CD8-positive, alpha-beta T cell (primary cell): ENCODE measurements at regions of chr17 and their contacts with region 1.

Region 1: DNA sequence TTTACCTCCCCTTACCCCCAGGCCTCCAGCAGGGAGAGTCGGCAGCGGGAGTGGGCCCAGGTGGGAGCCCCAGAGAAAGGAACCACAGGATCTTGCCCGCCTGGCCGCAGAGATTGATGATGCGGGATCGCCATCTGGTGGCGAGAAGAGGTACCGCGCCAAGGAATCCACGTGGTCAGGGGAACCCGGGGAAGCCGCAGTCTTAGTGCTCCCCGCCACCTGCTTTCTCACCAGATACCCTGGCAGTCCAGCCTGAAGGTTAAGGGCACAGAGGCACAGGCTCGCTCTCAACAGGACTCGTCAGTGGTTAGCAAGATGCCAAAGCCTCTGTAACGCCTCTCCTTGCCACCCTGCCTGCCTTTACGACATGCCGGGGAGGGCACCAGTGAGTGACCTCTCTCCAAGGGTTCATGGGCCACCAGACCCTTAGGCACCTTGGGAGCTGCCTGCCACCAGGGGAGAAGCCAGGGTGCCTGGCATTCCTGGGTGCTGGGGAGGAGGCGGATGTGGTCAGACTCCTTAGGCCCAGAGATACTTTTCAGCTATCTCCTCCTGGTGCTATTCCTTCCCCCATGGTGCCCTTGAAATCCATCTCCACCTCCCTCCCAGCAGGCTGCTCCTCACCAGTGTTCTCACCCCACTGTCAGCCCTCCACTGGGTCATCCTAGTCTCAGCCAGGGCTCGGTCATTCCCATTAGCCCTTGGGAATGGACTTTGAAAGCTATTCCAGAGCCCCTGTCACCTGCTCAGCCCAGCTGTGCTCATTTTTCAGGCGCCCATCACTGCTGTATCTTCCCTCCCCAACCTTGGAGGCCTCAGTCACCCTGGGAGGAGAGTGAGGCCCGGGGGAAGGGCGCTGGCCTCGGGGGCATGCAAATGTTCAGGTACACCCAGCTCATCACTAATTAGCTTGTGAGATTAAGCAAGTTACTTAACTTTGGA is 5.5 kb upstream of the RHBDF2 start:
- DNase-seq: peak; percentile 80 to 96 (median 90)
- ATAC-seq: peak; percentile 84
- H3K4me3 ChIP-seq: no peak overlapping the region
- H3K4me3 Mint-ChIP-seq: no peak overlapping the region
- H3K27ac ChIP-seq: no peak overlapping the region
- H3K27ac Mint-ChIP-seq: peak overlapping the region; percentile 22
- H3K4me1 ChIP-seq: peaks cover 19% of the 10 kb centered on the region
- H3K4me1 Mint-ChIP-seq: peaks cover 24% of the 10 kb centered on the region
- H3K27me3 ChIP-seq: no peaks in the 10 kb centered on the region
- H3K27me3 Mint-ChIP-seq: no peaks in the 10 kb centered on the region
- CTCF ChIP-seq: peak; percentile 93

Region 2: DNA sequence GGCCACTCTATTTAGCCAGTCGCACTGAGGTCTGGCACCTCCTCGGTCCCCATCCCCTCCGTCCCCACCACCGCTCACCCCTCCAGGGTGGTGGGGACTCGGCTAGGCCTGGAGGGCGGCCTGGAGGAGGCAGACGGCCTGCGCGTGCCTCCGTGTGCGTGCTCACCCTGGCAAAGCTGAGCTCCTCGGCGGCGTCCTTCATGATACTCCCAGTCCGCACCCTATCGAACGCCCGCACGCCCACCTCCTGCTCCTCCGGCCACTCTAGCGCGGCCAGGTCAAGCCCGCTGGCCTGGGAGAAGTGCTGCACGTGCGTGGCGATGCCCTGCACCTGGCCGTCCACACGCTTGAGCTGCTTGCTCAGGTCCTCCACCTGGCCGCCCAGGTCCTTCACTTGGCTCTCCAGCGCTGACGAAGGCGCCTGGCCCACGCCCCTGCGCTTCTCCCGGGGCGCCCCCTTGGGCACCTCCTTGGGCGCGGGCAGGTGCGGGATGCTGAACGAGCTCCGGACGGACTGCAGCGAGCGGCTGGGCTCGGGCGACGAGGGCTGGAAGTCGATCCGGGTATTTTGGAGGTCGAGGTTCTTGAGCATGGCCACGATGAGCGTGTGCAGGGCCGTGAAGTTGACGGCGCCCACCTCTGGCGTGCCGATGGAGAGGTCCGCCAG is 199.2 kb before region 1 on chr17:
- CTCF ChIA-PET with region 1: interaction called, 10 read pairs
- POLR2A ChIA-PET with region 1: no interaction called
- intact Hi-C with region 1: loop called (anchors 1 to 5 kb)
- DNase-seq: no peak
- ATAC-seq: no peak
- H3K4me3 ChIP-seq: no peak overlapping the region
- H3K4me3 Mint-ChIP-seq: no peak overlapping the region
- H3K27ac ChIP-seq: no peak overlapping the region
- H3K27ac Mint-ChIP-seq: no peak overlapping the region
- H3K4me1 ChIP-seq: no peaks in the 10 kb centered on the region
- H3K4me1 Mint-ChIP-seq: peaks cover 1% of the 10 kb centered on the region
- H3K27me3 ChIP-seq: no peaks in the 10 kb centered on the region
- H3K27me3 Mint-ChIP-seq: no peaks in the 10 kb centered on the region
- CTCF ChIP-seq: no peak

Region 3: DNA sequence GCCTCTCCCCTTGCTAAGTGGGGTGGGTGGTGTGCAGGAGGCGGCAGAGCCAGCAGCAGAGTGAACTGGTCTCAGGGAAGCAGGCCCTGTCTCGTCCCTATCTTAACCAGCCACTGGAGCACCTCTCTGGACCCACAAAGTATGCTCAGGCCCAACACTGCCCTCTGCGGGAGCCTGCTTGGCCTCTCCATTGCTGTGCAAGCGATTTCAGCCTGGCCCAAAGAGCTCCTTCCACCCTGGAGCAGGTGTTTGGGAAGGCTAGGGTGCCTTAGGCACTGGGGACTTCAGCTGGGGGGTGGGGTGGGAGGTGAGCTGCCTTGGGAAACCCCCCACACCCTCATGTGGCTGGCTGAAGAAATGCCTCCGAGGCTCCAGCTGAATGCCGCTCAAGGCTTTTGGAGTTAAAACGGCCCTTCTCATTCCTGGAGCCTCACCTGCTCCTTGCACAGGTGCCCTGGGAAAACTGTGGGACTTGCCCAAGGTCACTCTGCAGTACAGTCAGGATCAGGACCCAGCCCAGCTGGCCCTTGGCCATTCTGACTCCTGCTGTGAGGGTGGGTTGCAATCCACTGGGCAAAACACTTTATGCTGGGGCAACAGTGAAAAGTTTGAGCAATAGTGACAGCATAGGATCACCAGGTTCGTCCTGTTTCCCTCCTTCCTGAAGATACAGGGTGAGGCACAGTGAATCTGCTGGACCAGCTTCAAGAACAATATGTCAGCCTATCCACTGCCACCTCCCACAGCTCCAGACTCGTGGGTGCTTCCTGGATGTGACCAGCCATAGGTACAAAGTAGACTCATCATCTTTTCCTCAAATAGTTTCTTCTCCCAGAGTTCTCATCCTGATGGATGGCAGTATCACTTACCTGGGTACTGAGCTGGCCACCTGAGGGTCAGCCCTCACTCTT is 47.8 kb before region 1 on chr17:
- CTCF ChIA-PET with region 1: interaction called, 265 read pairs
- POLR2A ChIA-PET with region 1: no interaction called
- intact Hi-C with region 1: no loop called
- DNase-seq: no peak
- ATAC-seq: no peak
- H3K4me3 ChIP-seq: no peak overlapping the region
- H3K4me3 Mint-ChIP-seq: no peak overlapping the region
- H3K27ac ChIP-seq: no peak overlapping the region
- H3K27ac Mint-ChIP-seq: no peak overlapping the region
- H3K4me1 ChIP-seq: no peaks in the 10 kb centered on the region
- H3K4me1 Mint-ChIP-seq: no peaks in the 10 kb centered on the region
- H3K27me3 ChIP-seq: no peaks in the 10 kb centered on the region
- H3K27me3 Mint-ChIP-seq: no peaks in the 10 kb centered on the region
- CTCF ChIP-seq: no peak

Region 4: GRCh38 chr17:76467366-76467765 is 39.3 kb before region 1 on chr17 and contains the start of gene AANAT:
- CTCF ChIA-PET with region 1: interaction called, 265 read pairs
- POLR2A ChIA-PET with region 1: interaction called, 6 read pairs
- intact Hi-C with region 1: loop called (anchors 1 kb)
- DNase-seq: no peak
- ATAC-seq: no peak
- H3K4me3 ChIP-seq: no peak within 1 kb of the TSS
- H3K4me3 Mint-ChIP-seq: no peak within 1 kb of the TSS
- H3K27ac ChIP-seq: no peak within 1 kb of the TSS
- H3K27ac Mint-ChIP-seq: no peak within 1 kb of the TSS
- H3K4me1 ChIP-seq: peaks cover 3% of the 10 kb centered on the region
- H3K4me1 Mint-ChIP-seq: peaks cover 4% of the 10 kb centered on the region
- H3K27me3 ChIP-seq: no peaks in the 10 kb centered on the region
- H3K27me3 Mint-ChIP-seq: no peaks in the 10 kb centered on the region
- CTCF ChIP-seq: no peak
- total RNA-seq, gene AANAT: not detected

Region 5: GRCh38 chr17:76485569-76485968 is 21.1 kb before region 1 on chr17:
- CTCF ChIA-PET with region 1: interaction called, 48 read pairs
- POLR2A ChIA-PET with region 1: interaction called, 3 read pairs
- intact Hi-C with region 1: no loop called
- DNase-seq: no peak
- ATAC-seq: no peak
- H3K4me3 ChIP-seq: no peak overlapping the region
- H3K4me3 Mint-ChIP-seq: no peak overlapping the region
- H3K27ac ChIP-seq: no peak overlapping the region
- H3K27ac Mint-ChIP-seq: no peak overlapping the region
- H3K4me1 ChIP-seq: peaks cover 9% of the 10 kb centered on the region
- H3K4me1 Mint-ChIP-seq: peaks cover 11% of the 10 kb centered on the region
- H3K27me3 ChIP-seq: no peaks in the 10 kb centered on the region
- H3K27me3 Mint-ChIP-seq: no peaks in the 10 kb centered on the region
- CTCF ChIP-seq: no peak

Region 6: GRCh38 chr17:76492989-76493501 is 13.6 kb before region 1 on chr17:
- CTCF ChIA-PET with region 1: interaction called, 48 read pairs
- POLR2A ChIA-PET with region 1: interaction called, 8 read pairs
- intact Hi-C with region 1: no loop called
- DNase-seq: peak in 6 of 9 experiments; percentile 19 to 78 (median 49)
- ATAC-seq: peak; percentile 38
- H3K4me3 ChIP-seq: peak overlapping the region; percentile 41 to 42
- H3K4me3 Mint-ChIP-seq: peak overlapping the region; percentile 80
- H3K27ac ChIP-seq: peak overlapping the region; percentile 60 to 91
- H3K27ac Mint-ChIP-seq: peak overlapping the region; percentile 93
- H3K4me1 ChIP-seq: peaks cover 40% of the 10 kb centered on the region
- H3K4me1 Mint-ChIP-seq: peaks cover 42% of the 10 kb centered on the region
- H3K27me3 ChIP-seq: no peaks in the 10 kb centered on the region
- H3K27me3 Mint-ChIP-seq: no peaks in the 10 kb centered on the region
- CTCF ChIP-seq: no peak

Region 7: DNA sequence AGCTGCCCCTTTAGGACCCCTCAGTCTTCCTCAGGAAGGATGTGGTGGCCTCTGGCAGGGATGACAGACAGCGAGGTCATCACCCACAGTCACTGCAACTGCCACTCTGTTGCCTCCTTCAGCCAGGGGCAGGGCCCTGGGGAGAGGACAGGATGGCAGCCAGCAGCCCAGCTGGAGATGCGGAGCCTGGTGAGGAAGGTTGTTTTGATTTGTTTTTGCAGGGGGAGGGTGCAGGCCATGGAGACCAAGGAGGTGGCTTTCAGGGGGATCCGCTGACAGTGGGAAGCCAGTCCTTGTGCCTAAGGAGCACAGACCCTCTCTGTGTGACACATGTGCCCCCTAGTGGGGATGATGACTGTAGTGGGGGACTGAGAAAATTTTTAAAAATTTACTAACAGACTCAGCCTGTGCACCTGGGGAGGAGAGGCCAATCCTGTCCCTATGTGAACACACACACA is 40.5 kb after region 1 on chr17:
- CTCF ChIA-PET with region 1: interaction called, 10 read pairs
- POLR2A ChIA-PET with region 1: no interaction called
- intact Hi-C with region 1: no loop called
- DNase-seq: peak; percentile 30 to 83 (median 72)
- ATAC-seq: peak; percentile 94
- H3K4me3 ChIP-seq: no peak overlapping the region
- H3K4me3 Mint-ChIP-seq: no peak overlapping the region
- H3K27ac ChIP-seq: no peak overlapping the region
- H3K27ac Mint-ChIP-seq: no peak overlapping the region
- H3K4me1 ChIP-seq: peaks cover 7% of the 10 kb centered on the region
- H3K4me1 Mint-ChIP-seq: peaks cover 11% of the 10 kb centered on the region
- H3K27me3 ChIP-seq: no peaks in the 10 kb centered on the region
- H3K27me3 Mint-ChIP-seq: peaks cover 8% of the 10 kb centered on the region
- CTCF ChIP-seq: peak; percentile 62